Naive thymus-derived CD8-positive, alpha-beta T cell (primary cell): ENCODE measurements at regions of chr11 and their contacts with region 1.

Region 1: DNA sequence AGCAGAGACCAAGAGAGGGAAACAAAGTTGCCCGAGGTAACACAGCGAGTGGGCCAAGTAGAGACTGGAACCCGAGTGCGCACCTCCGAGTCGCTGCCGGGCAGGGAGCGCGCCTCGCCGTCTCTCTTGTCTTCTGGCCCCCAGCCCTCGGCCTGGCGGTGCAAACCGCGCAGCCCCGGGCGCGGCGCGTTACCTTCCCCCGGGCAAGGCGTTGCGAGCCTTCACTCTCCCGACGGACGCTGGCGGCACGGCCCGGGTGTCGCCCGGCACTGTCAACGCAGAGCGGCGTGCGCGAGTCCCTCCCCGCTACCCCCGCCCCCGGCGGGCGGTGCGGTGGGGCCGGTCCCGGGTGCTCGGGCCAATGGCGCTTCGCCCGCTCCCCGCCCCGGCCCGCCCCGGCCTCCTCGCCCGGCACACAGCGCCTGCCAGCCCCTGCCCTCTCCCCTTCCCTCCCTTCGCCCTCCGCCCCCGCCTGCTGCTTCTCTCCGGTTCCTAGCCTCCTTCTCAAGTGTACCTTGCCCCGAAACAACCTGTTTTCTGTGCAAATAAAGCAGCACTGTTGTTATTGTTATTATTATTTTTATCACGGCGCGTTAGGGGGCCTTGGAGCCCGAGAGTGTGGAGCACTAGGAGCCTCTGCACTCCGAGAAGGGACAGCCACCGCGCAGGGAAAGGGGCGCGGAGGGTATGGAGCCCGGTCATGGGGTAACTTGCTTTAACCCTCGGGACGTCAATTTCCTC is at the start of gene SYTL2:
- DNase-seq: peak; percentile 61 to 78 (median 72)
- ATAC-seq: peak; percentile 78 to 89
- H3K4me3 Mint-ChIP-seq: peak within 1 kb of the TSS; percentile 88 to 97 (median 93)
- H3K27ac Mint-ChIP-seq: peak within 1 kb of the TSS; percentile 87 to 97 (median 94)
- H3K4me1 Mint-ChIP-seq: peaks cover 23 to 39% (median 36%) of the 10 kb centered on the region in 4 donors
- H3K27me3 Mint-ChIP-seq: peaks cover 0 to 8% (median 0%) of the 10 kb centered on the region in 5 donors
- polyA plus RNA-seq, gene SYTL2: 11.8 to 27.9 (median 18.0) TPM

Region 2: GRCh38 chr11:85752890-85753581 is 58.0 kb before region 1 on chr11:
- POLR2A ChIA-PET with region 1: interaction called, 27 read pairs
- DNase-seq: peak; percentile 60 to 99 (median 95)
- ATAC-seq: peak; percentile 87 to 90
- H3K4me3 Mint-ChIP-seq: peak overlapping the region; percentile 69 to 93 (median 84)
- H3K27ac Mint-ChIP-seq: peak overlapping the region; percentile 89 to 99 (median 97)
- H3K4me1 Mint-ChIP-seq: peaks cover 57 to 92% (median 88%) of the 10 kb centered on the region in 4 donors
- H3K27me3 Mint-ChIP-seq: peaks cover 0 to 2% (median 0%) of the 10 kb centered on the region in 5 donors

Region 3: DNA sequence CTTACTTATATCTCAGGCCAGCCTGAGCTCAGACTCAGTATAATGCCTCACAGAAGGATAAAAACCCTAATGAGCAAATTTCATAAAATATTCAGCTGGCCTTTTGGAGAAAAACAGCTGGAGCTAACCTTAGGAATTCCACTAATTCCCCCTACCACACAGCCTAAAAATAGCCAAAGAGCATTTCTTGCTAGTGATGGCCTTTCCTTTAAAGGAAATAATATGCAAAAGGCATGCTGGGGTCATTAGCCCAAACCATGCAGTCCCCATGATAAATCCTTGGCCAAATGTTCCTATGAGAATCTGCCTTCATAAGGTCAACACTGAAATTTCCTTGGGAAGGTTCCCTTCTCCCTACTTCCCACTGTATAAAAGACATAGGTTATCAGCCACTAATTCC is 38.3 kb before region 1 on chr11:
- POLR2A ChIA-PET with region 1: no interaction called
- DNase-seq: no peak
- ATAC-seq: no peak
- H3K4me3 Mint-ChIP-seq: no peak overlapping the region
- H3K27ac Mint-ChIP-seq: peak overlapping the region in 2 of 10 donors; percentile 5 to 33
- H3K4me1 Mint-ChIP-seq: peaks cover 24 to 56% (median 25%) of the 10 kb centered on the region in 4 donors
- H3K27me3 Mint-ChIP-seq: no peaks in the 10 kb centered on the region

Region 4: DNA sequence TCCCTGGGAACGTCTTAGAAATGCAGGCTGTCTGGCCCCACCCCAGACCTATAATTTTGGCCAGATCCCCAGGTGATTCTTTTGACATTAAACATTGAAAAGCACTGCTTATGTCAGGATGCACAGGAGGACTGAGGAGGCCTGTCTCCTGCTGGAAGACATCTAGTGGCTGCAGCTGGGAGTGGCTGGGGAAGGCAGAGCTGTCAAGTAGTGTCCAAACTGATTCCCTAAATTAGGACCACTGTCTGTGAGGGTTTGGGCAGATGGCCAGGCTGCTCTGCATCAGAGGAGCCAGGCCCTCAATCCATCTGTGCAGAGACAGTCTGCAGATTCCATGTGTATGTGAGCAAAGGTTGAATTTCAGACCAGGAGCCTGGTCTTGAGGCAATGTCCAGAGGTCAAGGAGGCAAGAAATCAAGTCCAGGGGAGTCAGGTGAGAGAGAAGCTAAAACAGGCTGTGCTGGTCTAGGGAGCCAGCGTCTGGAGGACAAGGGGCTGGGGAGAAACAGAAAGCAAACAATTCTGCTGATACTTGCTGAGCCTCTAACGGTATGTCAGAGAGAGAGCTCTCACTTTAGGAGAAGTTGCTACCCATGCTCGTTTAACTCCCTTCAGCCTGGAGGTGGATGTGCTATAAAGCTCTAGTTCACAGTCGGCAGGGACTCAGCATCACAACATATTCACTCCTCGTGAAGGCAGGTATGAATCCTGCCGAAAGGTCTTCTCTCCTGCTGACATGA is 15.2 kb after region 1 on chr11:
- POLR2A ChIA-PET with region 1: interaction called, 14 read pairs
- DNase-seq: peak in 3 of 10 donors; percentile 29 to 37 (median 30)
- ATAC-seq: no peak
- H3K4me3 Mint-ChIP-seq: peak overlapping the region in 7 of 10 donors; percentile 2 to 58 (median 31)
- H3K27ac Mint-ChIP-seq: peak overlapping the region; percentile 29 to 95 (median 88)
- H3K4me1 Mint-ChIP-seq: peaks cover 28 to 69% (median 64%) of the 10 kb centered on the region in 4 donors
- H3K27me3 Mint-ChIP-seq: no peaks in the 10 kb centered on the region